Spleen (tissue), 13 donors: ENCODE measurements at regions of chr1 and their contacts with region 1.

Region 1: GRCh38 chr1:52002038-52002917 is 11.8 kb upstream of the RAB3B start:
- DNase-seq: no peak
- H3K4me3 ChIP-seq: no peak overlapping the region
- H3K27ac ChIP-seq: no peak overlapping the region
- H3K4me1 ChIP-seq: no peaks in the 10 kb centered on the region
- H3K27me3 ChIP-seq: peaks cover 0 to 39% (median 0%) of the 10 kb centered on the region in 7 donors
- CTCF ChIP-seq: peak; percentile 83 to 94 (median 89)
- POLR2A ChIP-seq: no peak

Region 2: GRCh38 chr1:51897699-51898031 is 104.6 kb before region 1 on chr1:
- intact Hi-C with region 1: loop called (anchors 2 kb)
- DNase-seq: no peak
- H3K4me3 ChIP-seq: no peak overlapping the region
- H3K27ac ChIP-seq: no peak overlapping the region
- H3K4me1 ChIP-seq: no peaks in the 10 kb centered on the region
- H3K27me3 ChIP-seq: peaks cover 0 to 66% (median 11%) of the 10 kb centered on the region in 7 donors
- CTCF ChIP-seq: no peak
- POLR2A ChIP-seq: no peak